ENCODE measurements at regions of chr11 and their contacts with region 1.

Region 1: DNA sequence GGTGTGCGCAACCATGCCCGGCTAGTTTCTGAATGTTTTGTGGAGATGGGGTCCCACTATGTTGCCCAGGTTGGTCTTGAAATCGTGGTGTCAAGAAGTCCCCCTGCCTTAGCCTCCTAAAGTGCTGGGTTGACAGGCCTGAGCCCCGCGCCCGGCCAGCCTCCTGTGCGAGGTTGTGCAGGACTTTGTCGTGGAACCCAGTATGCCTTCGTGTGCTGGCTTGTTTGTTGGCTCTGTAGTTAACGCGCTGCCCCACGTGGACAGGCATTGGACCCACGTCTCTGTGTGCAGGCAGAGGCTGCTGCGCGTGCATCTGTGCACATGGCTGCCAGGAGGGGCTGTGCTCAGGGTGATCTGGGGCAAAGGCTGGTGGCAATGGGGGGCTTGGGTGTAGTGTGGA is 33.9 kb upstream of the ZNF195 start:
- DNase-seq: no peak
- ATAC-seq: no peak
- H3K4me3 ChIP-seq: no peak overlapping the region
- H3K27ac ChIP-seq: no peak overlapping the region
- H3K4me1 ChIP-seq: no peaks in the 10 kb centered on the region
- H3K27me3 ChIP-seq: no peaks in the 10 kb centered on the region
- CTCF ChIP-seq: no peak
- EP300 ChIP-seq: no peak
- POLR2A ChIP-seq: no peak
- RAD21 ChIP-seq: no peak

Region 2: GRCh38 chr11:3109921-3110706 is 302.7 kb before region 1 on chr11:
- CTCF ChIA-PET with region 1: interaction called, 4 read pairs
- POLR2A ChIA-PET with region 1: no interaction called
- RAD21 ChIA-PET with region 1: interaction called, 3 read pairs
- SMC1A ChIA-PET with region 1: no interaction called
- in situ Hi-C with region 1: no loop called
- intact Hi-C with region 1: loop called (anchors 10 kb)
- DNase-seq: no peak
- ATAC-seq: peak; percentile 88
- H3K4me3 ChIP-seq: no peak overlapping the region
- H3K27ac ChIP-seq: no peak overlapping the region
- H3K4me1 ChIP-seq: no peaks in the 10 kb centered on the region
- H3K27me3 ChIP-seq: no peaks in the 10 kb centered on the region; a peak in 1 of 4 replicates
- CTCF ChIP-seq: peak; percentile 41 to 64 (median 48)
- EP300 ChIP-seq: no peak
- POLR2A ChIP-seq: no peak
- RAD21 ChIP-seq: 0 out of 2 replicates have a peak, but pooled peaks have one; percentile 26

Region 3: DNA sequence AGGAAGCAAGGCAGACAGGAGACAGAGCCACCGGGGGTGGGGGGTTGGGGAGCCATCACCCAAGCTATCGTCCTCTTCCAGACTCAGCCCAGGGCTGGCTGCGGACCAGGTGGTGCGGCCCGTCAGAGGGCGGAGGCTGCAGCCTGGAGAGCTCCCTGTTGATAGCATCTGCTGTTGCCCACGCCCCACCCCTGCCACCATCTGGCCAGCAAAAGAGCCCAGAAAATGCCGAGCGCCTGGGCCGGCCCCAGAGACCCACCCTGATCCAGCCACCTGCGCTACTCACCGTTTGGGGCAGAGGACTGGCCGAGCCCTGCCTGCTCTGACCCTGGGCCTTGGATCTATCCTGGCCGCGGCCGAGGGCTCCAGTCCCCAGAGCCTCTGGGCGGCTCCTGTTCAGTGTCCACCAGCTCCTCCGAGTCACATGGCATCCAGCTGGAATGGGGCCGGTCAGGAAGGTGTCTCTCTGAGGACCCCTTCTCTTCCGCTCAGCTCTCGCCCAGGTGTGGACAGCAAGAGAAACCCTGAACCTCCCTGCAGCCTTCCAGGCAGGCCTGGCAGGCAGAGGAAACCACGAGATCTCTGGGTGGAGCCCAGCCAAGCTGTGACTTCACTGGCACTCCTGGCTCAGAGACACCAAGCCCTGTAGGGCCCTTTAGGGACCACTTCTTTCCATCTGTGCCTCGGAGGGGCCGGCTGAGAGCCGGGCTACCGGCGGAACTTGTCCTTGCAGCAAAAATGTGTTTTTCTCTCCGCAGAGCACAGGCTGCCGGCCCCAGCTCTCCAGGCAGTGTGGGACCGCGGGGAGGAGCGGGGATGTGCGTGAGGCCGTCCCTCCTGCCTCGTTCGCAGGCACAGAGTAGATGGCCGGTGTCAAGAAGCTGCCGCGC is 180.7 kb before region 1 on chr11 and contains the start of gene MRGPRE:
- CTCF ChIA-PET with region 1: no interaction called
- POLR2A ChIA-PET with region 1: no interaction called
- RAD21 ChIA-PET with region 1: no interaction called
- SMC1A ChIA-PET with region 1: no interaction called
- in situ Hi-C with region 1: no loop called
- intact Hi-C with region 1: loop called (anchors 10 kb)
- DNase-seq: no peak
- ATAC-seq: no peak
- H3K4me3 ChIP-seq: no peak within 1 kb of the TSS
- H3K27ac ChIP-seq: no peak within 1 kb of the TSS
- H3K4me1 ChIP-seq: no peaks in the 10 kb centered on the region
- H3K27me3 ChIP-seq: no peaks in the 10 kb centered on the region; a peak in 2 of 4 replicates
- CTCF ChIP-seq: no peak
- EP300 ChIP-seq: no peak
- POLR2A ChIP-seq: no peak
- RAD21 ChIP-seq: no peak
- polyA plus RNA-seq, gene MRGPRE: not detected

Region 4: DNA sequence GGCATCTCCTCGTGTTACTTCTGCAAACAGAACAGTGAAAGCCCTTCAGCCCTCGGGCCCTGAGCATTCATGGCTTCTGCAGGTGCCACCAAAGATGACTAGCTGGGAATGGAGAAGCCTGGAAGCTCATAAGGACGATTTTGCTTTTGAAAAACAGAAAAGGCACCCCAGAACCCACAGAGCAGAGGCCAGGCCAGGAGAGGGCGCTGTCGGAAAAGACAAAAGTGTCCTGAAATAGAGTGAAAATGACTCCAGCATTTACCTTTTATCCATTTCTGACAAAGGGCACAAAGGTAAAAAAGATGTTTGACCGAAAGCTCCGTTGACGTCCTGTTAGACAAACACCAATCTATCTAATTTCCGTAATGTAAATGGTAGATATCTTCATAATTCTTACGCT is 71.5 kb before region 1 on chr11:
- CTCF ChIA-PET with region 1: interaction called, 109 read pairs
- POLR2A ChIA-PET with region 1: no interaction called
- RAD21 ChIA-PET with region 1: interaction called, 32 read pairs
- SMC1A ChIA-PET with region 1: interaction called, 42 read pairs
- in situ Hi-C with region 1: loop called (anchors 10 kb)
- intact Hi-C with region 1: loop called (anchors 10 kb)
- DNase-seq: no peak
- ATAC-seq: peak; percentile 76
- H3K4me3 ChIP-seq: no peak overlapping the region
- H3K27ac ChIP-seq: no peak overlapping the region
- H3K4me1 ChIP-seq: no peaks in the 10 kb centered on the region
- H3K27me3 ChIP-seq: no peaks in the 10 kb centered on the region
- CTCF ChIP-seq: peak; percentile 73 to 80 (median 75)
- EP300 ChIP-seq: no peak
- POLR2A ChIP-seq: no peak
- RAD21 ChIP-seq: peak; percentile 87

Region 5: DNA sequence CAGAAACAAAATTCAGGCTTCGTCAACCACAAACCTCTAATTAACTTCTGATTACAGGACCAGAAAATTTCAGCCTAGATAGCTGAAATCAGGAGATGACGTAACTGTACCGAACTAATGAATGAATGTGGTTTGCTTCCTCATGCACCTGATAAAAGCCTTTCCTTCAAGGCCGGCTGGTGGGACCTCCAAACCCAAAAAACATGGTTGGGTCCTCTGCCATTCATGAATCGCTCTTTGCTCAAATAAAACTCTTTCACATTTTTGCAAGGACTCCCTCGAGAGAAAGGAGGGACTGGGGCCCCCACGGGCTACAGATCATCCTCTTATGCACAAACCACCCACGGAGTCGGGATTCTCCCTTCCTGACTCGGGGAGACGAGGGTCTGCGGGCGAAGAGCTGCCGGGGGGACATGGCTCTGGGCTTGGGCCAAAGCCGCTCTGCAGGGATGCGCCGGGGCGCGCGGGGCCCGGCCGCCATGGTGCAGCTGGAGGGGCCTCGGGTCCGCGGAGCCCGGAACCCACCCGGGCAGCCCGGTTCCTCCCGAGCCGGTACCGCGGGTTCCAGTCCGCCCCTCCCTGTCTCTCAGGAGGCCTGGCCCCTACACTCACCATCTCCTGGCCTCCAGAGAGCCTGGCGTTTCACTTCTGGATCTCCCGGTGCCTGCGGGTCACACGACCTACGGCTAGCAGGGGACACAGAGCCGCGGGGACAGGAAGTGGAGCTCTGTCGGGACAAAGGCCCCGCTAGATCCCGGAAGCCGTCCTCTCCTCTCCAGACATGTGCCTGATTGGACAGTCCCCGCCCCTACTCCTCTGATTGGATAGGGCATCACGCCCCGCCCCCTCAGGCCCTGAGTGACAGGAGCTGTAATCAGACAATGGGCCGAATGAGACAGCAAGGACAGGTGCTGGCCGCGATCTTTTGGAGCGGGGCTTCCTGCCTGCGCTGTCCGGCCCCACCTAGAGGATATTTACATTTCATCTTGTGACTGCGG is 34.1 kb before region 1 on chr11 and contains the start of gene ZNF195:
- CTCF ChIA-PET with region 1: interaction called, 58 read pairs
- POLR2A ChIA-PET with region 1: no interaction called
- RAD21 ChIA-PET with region 1: interaction called, 12 read pairs
- SMC1A ChIA-PET with region 1: interaction called, 16 read pairs
- in situ Hi-C with region 1: no loop called
- intact Hi-C with region 1: no loop called
- DNase-seq: peak; percentile 94
- ATAC-seq: peak; percentile 99
- H3K4me3 ChIP-seq: peak within 1 kb of the TSS; percentile 81
- H3K27ac ChIP-seq: peak within 1 kb of the TSS; percentile 88
- H3K4me1 ChIP-seq: 0 out of 2 replicates have a peak, but pooled peaks cover 9% of the 10 kb centered on the region
- H3K27me3 ChIP-seq: no peaks in the 10 kb centered on the region
- CTCF ChIP-seq: no peak
- EP300 ChIP-seq: 0 out of 4 replicates have a peak, but pooled peaks of 1 of the 2 experiments have one; percentile 21
- POLR2A ChIP-seq: peak; percentile 92
- RAD21 ChIP-seq: no peak
- polyA plus RNA-seq, gene ZNF195: 37.3 to 41.6 TPM

Measured in GM12878 (cell line).